ENCODE measurements at regions of chr2 and their contacts with region 1.

Region 1: DNA sequence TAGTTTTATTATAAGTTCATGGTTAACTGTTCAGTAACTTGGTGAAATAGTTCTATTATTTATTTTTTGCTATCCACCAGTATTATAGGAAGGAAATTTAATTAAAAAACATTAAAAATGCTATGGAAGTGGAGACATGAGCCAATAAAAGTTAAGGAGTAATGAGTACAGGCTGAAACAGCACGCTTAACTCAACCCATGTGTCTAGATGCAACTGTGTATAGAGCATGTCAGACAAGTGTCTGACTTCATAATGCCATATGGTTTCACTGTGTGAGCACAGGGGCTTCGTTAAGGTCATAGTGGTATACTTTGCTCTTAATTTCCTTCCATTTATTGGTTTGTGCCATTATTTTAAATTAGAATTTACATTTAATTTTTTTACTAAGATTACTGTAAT is 566.8 kb upstream of the NRP2 start:
- DNase-seq: no peak
- H3K4me3 ChIP-seq: no peak overlapping the region
- H3K27ac ChIP-seq: no peak overlapping the region
- H3K4me1 ChIP-seq: peaks cover 6% of the 10 kb centered on the region
- H3K27me3 ChIP-seq: no peaks in the 10 kb centered on the region
- CTCF ChIP-seq: no peak
- POLR2A ChIP-seq: no peak

Region 2: GRCh38 chr2:205133544-205133943 is 18.0 kb after region 1 on chr2:
- CTCF ChIA-PET with region 1: interaction called, 3 read pairs
- POLR2A ChIA-PET with region 1: no interaction called
- dilution Hi-C with region 1: no loop called
- intact Hi-C with region 1: loop called (anchors 2 kb)
- DNase-seq: no peak
- H3K4me3 ChIP-seq: no peak overlapping the region
- H3K27ac ChIP-seq: no peak overlapping the region
- H3K4me1 ChIP-seq: peaks cover 4% of the 10 kb centered on the region
- H3K27me3 ChIP-seq: no peaks in the 10 kb centered on the region
- CTCF ChIP-seq: no peak
- POLR2A ChIP-seq: no peak

Region 3: GRCh38 chr2:205401511-205401910 is 286.0 kb after region 1 on chr2:
- CTCF ChIA-PET with region 1: no interaction called
- POLR2A ChIA-PET with region 1: no interaction called
- dilution Hi-C with region 1: no loop called
- intact Hi-C with region 1: no loop called
- DNase-seq: no peak
- H3K4me3 ChIP-seq: no peak overlapping the region
- H3K27ac ChIP-seq: no peak overlapping the region
- H3K4me1 ChIP-seq: peaks cover 17% of the 10 kb centered on the region
- H3K27me3 ChIP-seq: no peaks in the 10 kb centered on the region
- CTCF ChIP-seq: no peak
- POLR2A ChIP-seq: no peak

Measured in endothelial cell of umbilical vein (primary cell).